IMR-90 (cell line): ENCODE measurements at regions of chr9 and their contacts with region 1.

Region 1: DNA sequence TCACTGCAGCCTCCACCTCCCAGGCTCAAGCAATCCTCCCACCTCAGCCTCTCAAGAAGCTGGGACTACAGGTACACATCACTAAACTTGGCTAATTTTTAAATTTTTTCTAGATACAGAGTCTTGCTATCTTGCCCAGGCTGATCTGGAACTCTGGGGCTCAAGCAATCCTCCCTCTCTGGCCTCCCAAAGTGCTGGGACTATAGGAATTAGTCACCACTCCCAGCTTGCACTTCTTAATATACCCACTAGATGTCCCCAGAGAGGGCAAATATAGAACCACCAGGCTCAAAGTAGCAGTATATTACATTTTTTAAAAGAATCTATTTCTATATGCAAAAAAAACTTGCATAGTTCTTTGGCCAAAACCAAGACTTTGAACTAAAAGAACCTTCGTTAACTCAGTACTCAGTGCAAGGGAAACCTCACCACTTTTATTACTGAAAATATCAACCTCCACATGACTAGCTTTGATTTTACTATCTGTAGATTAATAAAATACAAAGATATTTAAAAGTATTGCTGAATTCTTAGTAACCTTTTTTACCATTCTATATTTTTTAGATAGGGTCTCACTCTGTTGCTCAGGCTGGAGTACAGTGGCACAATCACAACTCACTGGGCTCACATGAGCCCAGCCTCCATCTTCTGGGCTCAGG is 25.8 kb upstream of the HSD17B3 start:
- DNase-seq: peak; percentile 59
- ATAC-seq: peak; percentile 100
- H3K4me3 ChIP-seq: no peak overlapping the region
- H3K27ac ChIP-seq: no peak overlapping the region
- H3K4me1 ChIP-seq: no peaks in the 10 kb centered on the region
- H3K27me3 ChIP-seq: no peaks in the 10 kb centered on the region
- CTCF ChIP-seq: peak; percentile 88
- POLR2A ChIP-seq: no peak
- RAD21 ChIP-seq: peak; percentile 82

Region 2: DNA sequence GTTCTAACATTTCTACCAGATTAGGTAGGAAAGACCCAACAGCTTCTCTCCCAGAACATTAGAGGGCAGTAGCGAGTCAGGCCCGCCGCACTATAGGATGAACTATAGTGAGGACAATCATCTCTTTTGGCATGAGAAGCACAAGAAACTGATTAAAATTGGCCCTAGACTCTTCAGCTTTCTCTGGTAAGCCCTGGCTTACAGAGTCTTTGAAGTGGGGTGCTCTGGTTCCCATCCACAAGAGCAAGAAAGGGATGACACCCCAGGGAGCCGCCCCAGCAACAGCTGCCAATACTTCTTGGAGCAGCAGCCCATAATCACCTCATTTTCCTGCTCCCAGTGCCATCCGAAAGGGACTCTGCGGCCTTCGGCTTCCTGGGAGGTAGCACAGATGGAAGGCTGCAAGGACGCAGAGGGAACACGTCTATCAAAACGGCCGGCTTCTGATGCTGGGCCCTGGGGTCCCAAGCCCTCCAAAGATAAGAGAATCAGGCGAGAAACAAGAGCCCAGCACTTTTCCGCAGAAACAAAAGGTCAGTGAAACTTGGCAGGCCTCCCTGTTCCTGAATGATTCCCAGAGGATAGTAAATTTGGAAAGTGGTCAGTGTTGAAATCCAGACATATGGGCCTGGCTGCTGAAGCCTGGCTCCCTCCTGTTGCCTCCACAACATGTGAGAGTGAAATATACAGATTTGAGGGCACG is 95.1 kb before region 1 on chr9:
- CTCF ChIA-PET with region 1: no interaction called
- POLR2A ChIA-PET with region 1: no interaction called
- dilution Hi-C with region 1: no loop called
- in situ Hi-C with region 1: no loop called
- intact Hi-C with region 1: no loop called
- DNase-seq: peak; percentile 56
- ATAC-seq: peak; percentile 97
- H3K4me3 ChIP-seq: no peak overlapping the region
- H3K27ac ChIP-seq: no peak overlapping the region
- H3K4me1 ChIP-seq: no peaks in the 10 kb centered on the region
- H3K27me3 ChIP-seq: peaks cover 14% of the 10 kb centered on the region
- CTCF ChIP-seq: peak; percentile 81
- POLR2A ChIP-seq: no peak
- RAD21 ChIP-seq: peak; percentile 72

Region 3: DNA sequence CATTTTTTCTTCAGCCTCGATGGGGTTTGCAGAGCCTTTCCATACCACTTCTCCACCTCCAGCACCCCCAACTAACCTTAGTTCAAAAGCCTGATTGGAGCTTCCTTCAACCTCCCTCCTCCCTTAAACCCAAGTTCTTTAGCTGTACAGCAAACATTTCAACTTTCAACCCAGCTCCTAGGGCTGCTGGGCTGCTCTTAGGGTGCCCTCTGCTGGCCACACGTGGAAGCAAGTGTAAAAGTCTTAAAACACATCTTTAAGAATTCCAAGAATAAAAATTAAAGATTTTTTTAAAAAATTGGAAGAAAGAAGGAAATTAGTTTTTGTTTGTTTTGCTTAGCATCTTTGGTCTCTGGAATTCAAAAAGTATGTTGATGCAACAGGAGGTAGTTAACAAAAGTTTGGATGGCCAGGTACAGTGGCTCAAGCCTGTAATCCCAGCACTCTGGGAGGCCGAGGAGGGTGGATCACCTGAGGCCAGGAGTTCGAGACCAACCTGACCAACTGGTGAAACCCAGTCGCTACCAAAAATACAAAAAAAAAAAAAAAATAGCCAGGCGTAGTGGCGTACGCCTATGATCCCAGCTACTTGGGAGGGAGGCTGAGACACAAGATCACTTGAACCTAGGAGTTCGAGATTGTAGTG is 10.4 kb before region 1 on chr9:
- CTCF ChIA-PET with region 1: interaction called, 12 read pairs
- POLR2A ChIA-PET with region 1: no interaction called
- dilution Hi-C with region 1: no loop called
- in situ Hi-C with region 1: no loop called
- intact Hi-C with region 1: no loop called
- DNase-seq: peak; percentile 70
- ATAC-seq: peak; percentile 90
- H3K4me3 ChIP-seq: no peak overlapping the region
- H3K27ac ChIP-seq: no peak overlapping the region
- H3K4me1 ChIP-seq: no peaks in the 10 kb centered on the region
- H3K27me3 ChIP-seq: no peaks in the 10 kb centered on the region
- CTCF ChIP-seq: peak; percentile 93
- POLR2A ChIP-seq: no peak
- RAD21 ChIP-seq: peak; percentile 84

Region 4: GRCh38 chr9:96344458-96345180 is 16.8 kb after region 1 on chr9:
- CTCF ChIA-PET with region 1: interaction called, 4 read pairs
- POLR2A ChIA-PET with region 1: interaction called, 10 read pairs
- dilution Hi-C with region 1: no loop called
- in situ Hi-C with region 1: no loop called
- intact Hi-C with region 1: no loop called
- DNase-seq: peak; percentile 95
- ATAC-seq: peak; percentile 77
- H3K4me3 ChIP-seq: no peak overlapping the region
- H3K27ac ChIP-seq: peak overlapping the region; percentile 63; the same call in 1 of the 2 replicates
- H3K4me1 ChIP-seq: peaks cover 8% of the 10 kb centered on the region
- H3K27me3 ChIP-seq: no peaks in the 10 kb centered on the region
- CTCF ChIP-seq: no peak
- POLR2A ChIP-seq: no peak
- RAD21 ChIP-seq: no peak

Region 5: DNA sequence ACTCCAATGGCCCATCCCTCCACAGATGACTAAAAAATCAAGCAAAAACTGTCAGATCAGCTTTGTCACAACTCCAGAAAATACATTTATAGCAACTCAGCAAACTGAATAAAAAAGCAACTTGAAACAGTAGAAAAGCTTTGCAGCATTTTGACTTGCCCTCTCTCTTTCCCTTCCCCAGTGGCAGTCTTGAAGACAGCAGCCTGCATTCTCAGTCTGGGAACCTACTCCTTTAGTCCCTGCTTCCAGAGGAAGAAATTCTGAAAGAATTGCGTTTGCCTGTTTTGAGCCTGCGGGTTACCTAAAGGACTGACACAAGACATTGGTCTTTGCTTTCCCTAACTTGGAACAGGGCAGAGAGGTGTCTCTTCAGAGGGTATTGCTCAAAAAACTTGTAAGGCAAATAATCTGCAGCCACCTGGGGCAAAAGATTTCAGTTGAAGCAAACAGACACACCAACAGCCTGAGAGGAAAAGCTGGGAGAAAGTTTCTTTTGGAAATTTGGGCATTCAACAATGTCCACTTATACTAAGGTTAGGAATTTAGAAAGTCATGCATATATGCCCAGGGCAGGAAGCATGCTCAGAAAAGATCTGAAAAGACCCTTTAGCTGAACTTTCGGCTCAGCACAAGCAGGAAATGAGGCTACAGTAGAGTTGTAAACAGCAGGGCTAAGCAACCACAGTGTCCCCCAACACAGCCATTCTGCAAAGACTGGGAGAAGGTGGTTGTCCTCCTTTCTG is 70.9 kb after region 1 on chr9:
- CTCF ChIA-PET with region 1: no interaction called
- POLR2A ChIA-PET with region 1: no interaction called
- dilution Hi-C with region 1: no loop called
- in situ Hi-C with region 1: loop called (anchors 10 kb)
- intact Hi-C with region 1: no loop called
- DNase-seq: no peak
- ATAC-seq: peak; percentile 29; the same call in 1 of the 2 replicates
- H3K4me3 ChIP-seq: no peak overlapping the region
- H3K27ac ChIP-seq: no peak overlapping the region
- H3K4me1 ChIP-seq: peaks cover 2% of the 10 kb centered on the region
- H3K27me3 ChIP-seq: no peaks in the 10 kb centered on the region
- CTCF ChIP-seq: no peak
- POLR2A ChIP-seq: no peak
- RAD21 ChIP-seq: no peak

Region 6: GRCh38 chr9:96654443-96655197 is 326.8 kb after region 1 on chr9:
- CTCF ChIA-PET with region 1: no interaction called
- POLR2A ChIA-PET with region 1: no interaction called
- dilution Hi-C with region 1: no loop called
- in situ Hi-C with region 1: no loop called
- intact Hi-C with region 1: loop called (anchors 1 kb)
- DNase-seq: peak; percentile 86
- ATAC-seq: peak; percentile 80
- H3K4me3 ChIP-seq: peak overlapping the region; percentile 61
- H3K27ac ChIP-seq: peak overlapping the region; percentile 45
- H3K4me1 ChIP-seq: no peaks in the 10 kb centered on the region
- H3K27me3 ChIP-seq: no peaks in the 10 kb centered on the region; the same call in 1 of the 2 replicates
- CTCF ChIP-seq: peak; percentile 24; the same call in 1 of the 2 replicates
- POLR2A ChIP-seq: peak; percentile 12
- RAD21 ChIP-seq: no peak

Region 7: DNA sequence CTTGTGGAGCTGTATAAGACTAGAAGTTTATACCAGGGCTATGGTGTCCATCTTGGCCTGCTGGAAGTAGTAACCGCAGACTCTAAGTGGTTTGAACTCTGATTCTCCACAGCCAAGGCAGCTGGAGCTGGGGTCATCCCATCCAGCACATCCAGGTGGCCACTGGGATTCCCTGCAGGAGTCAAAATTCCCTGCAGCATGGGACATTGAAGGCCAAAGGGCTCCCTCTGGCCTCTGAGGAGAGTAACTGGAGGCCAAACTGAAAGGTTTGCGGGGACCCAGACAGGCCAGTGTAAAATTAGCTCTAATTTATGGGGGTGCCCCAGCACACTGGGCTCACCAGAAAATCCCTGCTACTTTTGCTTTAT is 339.5 kb after region 1 on chr9:
- CTCF ChIA-PET with region 1: interaction called, 12 read pairs
- POLR2A ChIA-PET with region 1: no interaction called
- dilution Hi-C with region 1: no loop called
- in situ Hi-C with region 1: loop called (anchors 5 kb)
- intact Hi-C with region 1: loop called (anchors 1 kb)
- DNase-seq: no peak
- ATAC-seq: no peak
- H3K4me3 ChIP-seq: no peak overlapping the region
- H3K27ac ChIP-seq: no peak overlapping the region
- H3K4me1 ChIP-seq: no peaks in the 10 kb centered on the region
- H3K27me3 ChIP-seq: no peaks in the 10 kb centered on the region
- CTCF ChIP-seq: no peak
- POLR2A ChIP-seq: no peak
- RAD21 ChIP-seq: no peak